Activated CD8-positive, alpha-beta memory T cell treated with anti-CD3 and anti-CD28 coated beads, Interleukin-2, amount 10 ng/mL, durations not matched to agents 7 days and 5 days (primary cell): ENCODE measurements at regions of chr10 and their contacts with region 1.

Region 1: GRCh38 chr10:99248824-99249223 is 13.2 kb upstream of the HPSE2 start:
- DNase-seq: no peak
- ATAC-seq: no peak
- H3K4me3 Mint-ChIP-seq: no peak overlapping the region
- H3K27ac Mint-ChIP-seq: no peak overlapping the region
- H3K4me1 Mint-ChIP-seq: no peaks in the 10 kb centered on the region
- H3K27me3 Mint-ChIP-seq: peaks cover 8% of the 10 kb centered on the region

Region 2: DNA sequence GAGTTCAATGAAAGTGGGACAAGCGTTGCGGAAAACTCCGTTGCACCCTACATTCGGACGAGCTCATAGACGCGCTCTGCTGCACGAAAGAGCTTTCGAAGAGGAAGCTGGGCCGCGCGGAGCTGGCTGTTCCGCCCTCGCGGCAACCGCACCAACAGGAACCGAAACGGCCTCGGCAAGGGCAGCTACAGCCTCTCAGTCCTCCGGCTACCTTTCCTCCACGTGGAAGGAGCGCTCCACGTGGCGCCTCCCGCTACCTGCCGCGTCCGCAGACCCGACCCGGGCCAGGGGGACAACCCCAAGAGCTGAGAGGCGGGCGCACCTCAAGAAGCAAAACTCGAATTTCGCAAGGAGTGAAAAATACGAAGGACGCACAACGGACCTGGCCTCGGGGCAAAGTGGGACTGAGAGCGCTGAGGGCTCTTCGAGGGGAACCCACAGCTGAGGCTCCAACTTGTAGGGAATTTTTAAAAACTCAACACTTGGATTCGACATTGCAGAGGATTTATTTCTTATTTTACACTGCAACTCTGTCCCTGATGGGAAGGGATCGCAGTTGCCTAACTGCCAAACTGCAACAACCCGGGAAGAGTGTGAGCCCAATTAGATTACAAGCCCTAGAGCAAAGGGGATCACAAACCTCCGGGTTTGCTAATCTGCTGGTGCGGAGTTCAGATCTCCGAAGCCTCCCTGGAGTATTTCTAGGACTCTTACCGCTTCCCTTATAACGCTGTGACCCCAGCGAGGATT is 14.6 kb before region 1 on chr10:
- CTCF ChIA-PET with region 1: interaction called, 10 read pairs
- DNase-seq: peak; percentile 68
- ATAC-seq: peak; percentile 73
- H3K4me3 Mint-ChIP-seq: peak overlapping the region; percentile 28
- H3K27ac Mint-ChIP-seq: no peak overlapping the region
- H3K4me1 Mint-ChIP-seq: peaks cover 19% of the 10 kb centered on the region
- H3K27me3 Mint-ChIP-seq: peaks cover 85% of the 10 kb centered on the region